AG04449 (cell line): ENCODE measurements at regions of chr5 and their contacts with region 1.

Region 1: DNA sequence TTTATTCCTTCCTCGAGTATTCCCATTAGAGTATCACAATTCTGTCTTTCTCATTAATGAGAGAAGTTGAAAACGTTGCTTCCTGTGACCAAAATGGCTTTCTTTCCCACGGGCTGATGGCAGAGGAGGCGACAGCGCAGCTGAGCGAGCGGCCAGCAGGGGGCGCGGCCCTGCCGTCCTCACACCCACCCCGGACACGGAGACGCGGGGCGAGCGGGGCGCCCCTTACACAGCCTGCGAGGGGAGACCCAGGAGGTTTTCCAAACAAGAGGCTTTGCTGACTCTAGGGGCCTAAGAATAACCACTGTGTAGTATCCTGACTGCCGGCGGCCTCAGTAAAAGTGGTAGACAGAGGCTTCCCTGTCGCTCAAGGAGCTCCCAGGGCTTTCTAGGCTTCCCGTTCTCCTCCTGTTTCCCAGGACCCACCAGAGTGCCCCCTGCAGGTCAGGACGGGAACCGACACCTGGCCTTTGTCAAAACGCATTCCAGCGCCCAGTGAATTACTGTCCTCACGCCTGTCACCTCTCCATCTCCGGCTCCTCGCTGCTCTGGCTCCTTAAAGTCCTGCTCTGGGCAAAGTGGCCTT is 27.3 kb upstream of the FGF1 start:
- DNase-seq: no peak
- H3K4me3 ChIP-seq: peak overlapping the region; percentile 75
- CTCF ChIP-seq: peak; percentile 98

Region 2: DNA sequence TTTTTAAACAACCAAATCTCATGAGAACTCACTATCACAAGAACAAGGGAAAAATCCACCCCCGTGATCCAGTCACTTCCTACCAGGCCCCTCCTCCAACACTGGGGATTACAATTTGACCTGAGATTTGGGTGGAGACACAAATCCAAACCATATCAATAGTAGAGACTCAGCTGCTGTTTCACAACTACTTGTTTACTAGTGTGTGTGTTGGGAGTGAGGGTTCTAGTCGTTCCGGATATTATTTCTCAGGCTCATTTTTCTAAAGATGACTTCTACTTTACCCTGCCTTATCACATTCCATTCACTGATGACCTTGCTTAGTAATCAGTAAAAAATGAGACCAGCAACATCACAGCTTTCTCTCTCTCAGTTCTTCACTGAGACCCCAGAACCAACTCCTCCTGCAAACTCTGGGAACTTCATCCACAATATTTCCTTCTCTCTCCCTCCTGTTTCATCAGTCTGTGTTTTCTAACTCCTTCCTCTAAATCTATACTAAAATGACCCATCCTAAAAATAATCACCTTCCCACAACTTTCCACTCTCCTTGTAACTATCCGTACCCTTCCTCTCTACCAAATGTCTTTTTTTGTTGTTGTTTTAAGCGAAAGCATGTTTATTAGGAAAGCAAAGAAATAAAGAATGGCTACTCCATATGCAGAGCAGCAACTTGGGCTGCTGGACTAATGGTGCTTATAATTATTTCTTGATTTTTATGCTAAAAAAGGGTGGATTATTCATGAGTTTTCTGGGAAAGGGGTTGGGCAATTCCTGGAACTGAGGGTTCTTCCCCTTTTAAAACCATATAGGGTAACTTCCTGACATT is 266.9 kb before region 1 on chr5:
- CTCF ChIA-PET with region 1: no interaction called
- POLR2A ChIA-PET with region 1: no interaction called
- DNase-seq: no peak
- H3K4me3 ChIP-seq: no peak overlapping the region
- CTCF ChIP-seq: no peak

Region 3: DNA sequence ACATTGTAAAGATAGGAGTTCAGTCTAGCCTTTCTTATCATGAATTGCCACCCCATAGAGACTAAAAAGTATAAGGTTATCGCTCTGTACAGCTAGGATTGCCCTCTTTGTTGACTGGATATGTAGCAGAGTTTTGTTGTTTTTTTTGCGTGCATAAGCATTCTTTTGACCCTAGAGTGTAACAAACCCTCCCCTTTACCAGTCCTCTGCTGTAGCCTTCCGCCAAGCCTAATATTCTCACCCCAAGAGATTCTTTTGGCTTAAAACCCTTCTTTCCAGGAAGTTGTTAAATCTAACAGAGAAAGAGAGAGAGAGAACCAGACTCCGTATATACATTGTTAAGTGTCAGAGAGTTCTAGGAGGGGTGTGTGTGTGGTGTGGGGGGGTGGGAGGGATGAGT is 141.2 kb before region 1 on chr5:
- CTCF ChIA-PET with region 1: no interaction called
- POLR2A ChIA-PET with region 1: no interaction called
- DNase-seq: no peak
- H3K4me3 ChIP-seq: no peak overlapping the region
- CTCF ChIP-seq: no peak

Region 4: GRCh38 chr5:142611154-142611553 is 102.1 kb before region 1 on chr5:
- CTCF ChIA-PET with region 1: interaction called, 235 read pairs
- POLR2A ChIA-PET with region 1: no interaction called
- DNase-seq: no peak
- H3K4me3 ChIP-seq: no peak overlapping the region
- CTCF ChIP-seq: peak; percentile 94

Region 5: GRCh38 chr5:142655339-142656267 is 57.6 kb before region 1 on chr5:
- CTCF ChIA-PET with region 1: interaction called, 172 read pairs
- POLR2A ChIA-PET with region 1: no interaction called
- DNase-seq: no peak
- H3K4me3 ChIP-seq: no peak overlapping the region
- CTCF ChIP-seq: peak; percentile 99

Region 6: GRCh38 chr5:142690667-142691066 is 22.5 kb before region 1 on chr5:
- CTCF ChIA-PET with region 1: interaction called, 238 read pairs
- POLR2A ChIA-PET with region 1: no interaction called
- DNase-seq: no peak
- H3K4me3 ChIP-seq: no peak overlapping the region
- CTCF ChIP-seq: no peak

Region 7: GRCh38 chr5:142769741-142770631 is 56.8 kb after region 1 on chr5 and contains the start of gene ARHGAP26:
- CTCF ChIA-PET with region 1: interaction called, 53 read pairs
- POLR2A ChIA-PET with region 1: no interaction called
- DNase-seq: peak; percentile 65
- H3K4me3 ChIP-seq: peak within 1 kb of the TSS; percentile 99
- CTCF ChIP-seq: peak; percentile 70

Region 8: DNA sequence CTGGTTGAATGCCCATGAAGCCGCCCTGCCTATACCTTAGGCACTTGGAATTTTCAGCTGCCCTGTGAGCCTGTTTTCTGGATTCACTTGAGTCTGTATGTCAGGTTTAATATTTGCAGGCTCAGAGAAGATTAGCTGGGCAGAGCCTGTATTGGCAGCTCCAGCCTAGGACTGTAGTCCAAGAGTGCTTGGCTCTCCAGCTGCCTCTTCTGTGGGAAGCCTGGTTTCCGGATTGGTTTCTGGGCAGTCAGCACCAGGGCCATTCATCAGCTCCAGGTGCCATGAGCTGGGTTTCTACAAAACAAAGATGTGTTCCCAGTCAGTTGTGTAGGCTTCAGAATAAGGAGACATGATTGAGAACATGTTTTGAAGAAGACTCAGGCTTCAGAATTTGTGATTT is 147.1 kb after region 1 on chr5:
- CTCF ChIA-PET with region 1: interaction called, 54 read pairs
- POLR2A ChIA-PET with region 1: no interaction called
- DNase-seq: no peak
- H3K4me3 ChIP-seq: no peak overlapping the region
- CTCF ChIP-seq: no peak

Region 9: DNA sequence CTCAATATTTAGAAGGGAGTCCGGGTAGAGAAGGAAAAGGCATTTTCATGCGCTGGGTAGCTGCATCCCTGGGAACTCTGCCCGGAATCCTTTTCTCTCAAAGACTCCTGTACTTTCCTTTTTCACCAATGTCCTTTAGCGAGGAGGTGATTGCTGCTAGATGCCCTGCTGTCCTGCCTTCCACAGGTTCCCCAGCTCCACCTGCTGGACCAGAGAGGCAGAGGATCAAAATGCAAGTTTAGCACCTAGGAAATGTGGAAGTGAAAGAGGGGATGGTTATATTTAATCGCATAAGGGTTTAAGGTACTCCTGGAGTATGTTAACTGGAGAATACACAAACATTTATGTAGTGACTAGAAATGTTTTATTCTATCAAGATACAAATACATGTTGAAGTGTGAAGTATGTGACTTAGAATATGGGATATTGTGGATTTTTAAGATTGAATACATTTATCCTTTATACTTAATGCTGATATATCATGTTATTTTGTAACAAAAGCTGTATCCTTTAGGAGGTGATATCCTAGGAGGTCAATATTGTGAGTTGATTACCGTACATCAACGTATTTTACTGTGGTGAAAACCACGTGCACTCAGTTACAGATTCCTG is 202.7 kb after region 1 on chr5:
- CTCF ChIA-PET with region 1: interaction called, 38 read pairs
- POLR2A ChIA-PET with region 1: no interaction called
- DNase-seq: no peak
- H3K4me3 ChIP-seq: no peak overlapping the region
- CTCF ChIP-seq: peak; percentile 65

Region 10: DNA sequence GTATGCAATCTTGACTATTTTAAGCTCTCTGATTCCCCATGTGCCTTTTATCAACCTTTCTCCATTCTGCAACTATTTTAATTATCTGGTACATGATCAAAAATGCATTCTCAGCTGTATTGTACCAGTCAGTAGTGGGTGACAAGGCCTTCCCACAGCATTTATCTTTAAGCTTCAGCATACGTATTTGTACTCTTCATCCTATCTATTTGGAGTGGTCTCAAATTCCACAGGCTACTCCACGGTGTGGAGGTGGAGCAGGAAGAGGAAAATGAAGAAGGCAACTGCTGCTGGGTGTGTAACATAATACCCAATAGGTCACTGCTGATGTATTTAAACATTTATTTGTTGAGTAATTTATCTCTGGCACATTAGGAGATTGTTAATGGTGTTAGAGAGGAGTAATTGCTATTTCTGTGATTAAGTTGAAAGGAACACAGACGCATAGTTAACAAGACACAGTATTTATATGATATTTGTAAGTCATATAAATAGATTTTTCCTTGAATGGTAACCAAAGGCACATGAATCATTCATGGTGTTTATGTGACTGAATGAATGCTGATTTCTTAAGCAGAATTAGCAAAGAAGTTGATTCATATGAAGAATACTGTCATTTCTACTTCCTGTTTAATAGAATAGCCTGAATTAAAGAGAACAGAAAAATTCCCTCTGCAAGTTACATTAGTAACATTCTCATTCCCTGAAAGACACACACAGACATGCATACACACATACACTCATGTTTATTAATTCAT is 844.0 kb after region 1 on chr5:
- CTCF ChIA-PET with region 1: no interaction called
- POLR2A ChIA-PET with region 1: no interaction called
- DNase-seq: no peak
- H3K4me3 ChIP-seq: no peak overlapping the region
- CTCF ChIP-seq: no peak